HCT116 (cell line): ENCODE measurements at regions of chr4 and their contacts with region 1.

Region 1: GRCh38 chr4:158722917-158723793 is at the start of gene PPID:
- DNase-seq: peak; percentile 78
- ATAC-seq: peak; percentile 89
- H3K4me3 ChIP-seq: peak within 1 kb of the TSS; percentile 80 to 88
- H3K27ac ChIP-seq: peak within 1 kb of the TSS; percentile 72
- H3K4me1 ChIP-seq: peaks cover 2 to 21% of the 10 kb centered on the region in 2 experiments; a peak in 2 of 4 replicates
- H3K27me3 ChIP-seq: no peaks in the 10 kb centered on the region
- CTCF ChIP-seq: no peak
- POLR2A ChIP-seq: peak; percentile 45
- RAD21 ChIP-seq: no peak
- total RNA-seq, gene PPID: 48.2 TPM

Region 2: GRCh38 chr4:158671915-158672806 is 51.0 kb before region 1 on chr4 and contains the start of gene ETFDH:
- CTCF ChIA-PET with region 1: no interaction called
- POLR2A ChIA-PET with region 1: no interaction called
- RAD21 ChIA-PET with region 1: no interaction called
- intact Hi-C with region 1: loop called (anchors 5 kb)
- DNase-seq: peak; percentile 99
- ATAC-seq: peak; percentile 86
- H3K4me3 ChIP-seq: peak within 1 kb of the TSS; percentile 80 to 86
- H3K27ac ChIP-seq: peak within 1 kb of the TSS; percentile 70
- H3K4me1 ChIP-seq: peaks cover 9 to 17% of the 10 kb centered on the region in 2 experiments; a peak in 3 of 4 replicates
- H3K27me3 ChIP-seq: no peaks in the 10 kb centered on the region
- CTCF ChIP-seq: peak in 2 of 3 experiments; percentile 57; a peak in 4 of 6 replicates
- POLR2A ChIP-seq: peak; percentile 2
- RAD21 ChIP-seq: no peak
- total RNA-seq, gene ETFDH: 22.2 TPM